ENCODE measurements at regions of chr5 and their contacts with region 1.

Region 1: DNA sequence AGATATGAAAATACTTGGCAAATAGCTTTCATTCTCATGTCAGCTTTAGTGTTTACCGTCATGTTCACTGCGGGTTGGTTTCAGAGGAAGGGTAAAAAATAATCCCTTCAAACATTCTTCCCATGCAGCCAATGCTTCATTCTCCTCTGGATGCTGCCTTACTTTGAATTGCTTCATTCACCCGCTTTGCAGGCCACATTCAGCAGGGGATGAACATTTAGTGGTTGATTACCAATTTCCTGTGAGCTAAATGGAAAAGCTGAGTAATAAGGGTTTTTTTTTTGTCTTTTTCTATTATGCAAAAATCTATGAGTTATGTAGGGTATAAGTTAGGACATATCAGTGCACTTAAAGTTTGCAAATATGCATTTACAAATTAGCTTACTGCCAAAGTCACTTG is 96.3 kb upstream of the MEF2C start:
- DNase-seq: no peak
- H3K4me3 Mint-ChIP-seq: no peak overlapping the region
- H3K27ac Mint-ChIP-seq: peak overlapping the region; percentile 72
- H3K4me1 Mint-ChIP-seq: peaks cover 12% of the 10 kb centered on the region
- H3K27me3 Mint-ChIP-seq: peaks cover 3% of the 10 kb centered on the region

Region 2: GRCh38 chr5:88826646-88827585 is 152.3 kb before region 1 on chr5:
- intact Hi-C with region 1: loop called (anchors 1 kb)
- DNase-seq: no peak
- H3K4me3 Mint-ChIP-seq: peak overlapping the region; percentile 28
- H3K27ac Mint-ChIP-seq: peak overlapping the region; percentile 80
- H3K4me1 Mint-ChIP-seq: peaks cover 44% of the 10 kb centered on the region
- H3K27me3 Mint-ChIP-seq: peaks cover 3% of the 10 kb centered on the region

Region 3: DNA sequence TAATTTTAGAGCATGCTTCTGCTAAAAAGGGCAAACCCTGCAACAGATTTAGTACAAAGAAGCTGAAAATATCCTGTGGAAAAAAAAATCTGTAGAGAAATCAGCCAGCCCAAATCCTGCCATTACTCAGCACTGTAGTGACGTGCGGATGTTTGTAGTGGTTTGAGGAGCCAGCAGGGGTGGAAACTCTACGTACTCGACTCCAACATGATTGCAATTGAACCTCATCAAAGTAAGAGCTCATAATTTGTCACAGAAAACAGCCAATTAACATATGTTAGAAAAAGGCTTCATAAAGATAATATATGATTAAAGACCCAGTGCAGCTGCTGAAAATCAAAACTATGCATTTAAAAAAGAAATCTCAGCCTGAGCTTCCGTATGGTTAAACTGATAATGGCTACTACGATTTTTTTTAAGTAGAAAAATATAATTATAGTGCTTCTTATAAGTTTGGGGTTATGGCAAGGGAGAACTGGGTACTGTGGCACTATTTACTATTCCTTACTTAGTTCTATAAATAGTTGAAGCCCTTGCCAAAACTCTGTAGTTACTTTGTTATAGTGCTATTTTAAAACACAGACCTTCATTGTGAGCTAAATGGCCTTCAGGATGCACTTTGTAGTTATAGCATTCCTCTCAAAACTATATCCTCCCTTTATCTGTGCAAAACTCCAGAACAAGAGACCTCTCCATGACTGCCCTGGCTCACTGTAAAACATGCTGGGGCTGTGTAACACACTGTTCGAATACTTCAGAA is 145.7 kb before region 1 on chr5:
- intact Hi-C with region 1: loop called (anchors 1 kb)
- DNase-seq: no peak
- H3K4me3 Mint-ChIP-seq: no peak overlapping the region
- H3K27ac Mint-ChIP-seq: no peak overlapping the region
- H3K4me1 Mint-ChIP-seq: peaks cover 16% of the 10 kb centered on the region
- H3K27me3 Mint-ChIP-seq: no peaks in the 10 kb centered on the region

Region 4: GRCh38 chr5:89065919-89066318 is 86.7 kb after region 1 on chr5:
- intact Hi-C with region 1: loop called (anchors 5 kb)
- DNase-seq: peak; percentile 1
- H3K4me3 Mint-ChIP-seq: no peak overlapping the region
- H3K27ac Mint-ChIP-seq: no peak overlapping the region
- H3K4me1 Mint-ChIP-seq: peaks cover 5% of the 10 kb centered on the region
- H3K27me3 Mint-ChIP-seq: peaks cover 2% of the 10 kb centered on the region